Heart left ventricle (tissue), 16 donors: ENCODE measurements at regions of chr10 and their contacts with region 1.

Region 1: GRCh38 chr10:78407009-78407711 is 373.5 kb downstream of the RPS24 start:
- DNase-seq: peak; percentile 77 to 88 (median 83)
- ATAC-seq: peak; percentile 50 to 77 (median 70)
- H3K4me3 ChIP-seq: peak overlapping the region in 10 of 12 donors; percentile 16 to 51 (median 36)
- H3K27ac ChIP-seq: peak overlapping the region in 9 of 12 donors; percentile 50 to 94 (median 81)
- H3K4me1 ChIP-seq: peaks cover 0 to 45% (median 27%) of the 10 kb centered on the region in 12 donors
- H3K27me3 ChIP-seq: peaks cover 0 to 12% (median 0%) of the 10 kb centered on the region in 9 donors
- CTCF ChIP-seq: no peak
- POLR2A ChIP-seq: no peak

Region 2: DNA sequence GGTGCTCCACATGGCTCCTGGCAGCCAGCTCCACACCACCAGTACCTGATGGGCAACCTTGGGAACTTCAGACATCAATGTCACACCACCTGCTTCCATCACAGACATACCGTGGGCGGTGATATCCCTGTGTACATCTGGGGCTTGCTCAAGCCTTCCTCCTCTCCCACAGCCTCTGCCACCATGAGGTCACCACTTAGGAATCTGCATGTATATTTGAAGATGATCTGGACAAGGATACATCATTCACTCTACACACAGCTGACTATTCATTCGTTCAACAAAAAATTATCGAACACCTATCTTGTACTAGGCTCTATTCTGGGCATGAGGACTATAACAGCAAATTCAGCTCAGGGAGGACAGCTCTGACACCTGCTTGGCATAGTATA is 487.5 kb before region 1 on chr10:
- intact Hi-C with region 1: no loop called
- DNase-seq: no peak
- ATAC-seq: peak in 1 of 4 donors; percentile 24
- H3K4me3 ChIP-seq: no peak overlapping the region
- H3K27ac ChIP-seq: no peak overlapping the region
- H3K4me1 ChIP-seq: peaks cover 0 to 26% (median 7%) of the 10 kb centered on the region in 12 donors
- H3K27me3 ChIP-seq: no peaks in the 10 kb centered on the region
- CTCF ChIP-seq: no peak
- POLR2A ChIP-seq: no peak

Region 3: DNA sequence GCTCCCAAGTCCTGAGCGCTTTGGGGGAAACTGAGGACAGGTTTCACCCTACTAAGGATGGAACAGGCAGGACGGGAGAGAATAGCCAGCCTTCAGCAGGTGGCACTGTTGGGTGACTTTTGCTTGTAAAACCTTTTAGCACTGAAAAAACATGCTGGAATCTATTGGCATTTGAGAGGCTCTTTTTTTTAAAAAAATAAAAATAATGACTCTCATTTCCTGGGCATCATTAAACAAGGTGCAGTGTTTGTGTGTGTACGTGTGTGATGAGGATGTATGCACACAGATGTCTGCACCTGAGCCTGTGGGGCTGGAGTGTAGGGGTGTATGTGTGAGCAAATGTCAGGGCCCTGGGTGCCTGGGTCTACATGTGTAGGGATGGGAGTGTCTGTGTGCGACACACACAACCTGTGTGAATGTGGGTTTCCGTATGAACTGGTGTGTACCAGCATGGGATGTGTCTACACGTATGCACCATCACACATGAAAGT is 195.6 kb before region 1 on chr10:
- intact Hi-C with region 1: loop called in 2 of 10 experiments (anchors 5 kb)
- DNase-seq: peak in 1 of 5 donors; percentile 47
- ATAC-seq: peak in 3 of 4 donors; percentile 5 to 18 (median 9)
- H3K4me3 ChIP-seq: no peak overlapping the region
- H3K27ac ChIP-seq: peak overlapping the region in 5 of 12 donors; percentile 19 to 62 (median 52)
- H3K4me1 ChIP-seq: peaks cover 0 to 38% (median 19%) of the 10 kb centered on the region in 12 donors
- H3K27me3 ChIP-seq: no peaks in the 10 kb centered on the region
- CTCF ChIP-seq: peak in 11 of 12 donors; percentile 21 to 69 (median 55)
- POLR2A ChIP-seq: no peak

Region 4: GRCh38 chr10:78331391-78331922 is 75.7 kb before region 1 on chr10:
- intact Hi-C with region 1: no loop called
- DNase-seq: peak in 2 of 5 donors; percentile 13 to 42
- ATAC-seq: peak in 3 of 4 donors; percentile 38 to 71 (median 56)
- H3K4me3 ChIP-seq: no peak overlapping the region
- H3K27ac ChIP-seq: peak overlapping the region in 3 of 12 donors; percentile 1 to 78 (median 7)
- H3K4me1 ChIP-seq: peaks cover 0 to 24% (median 8%) of the 10 kb centered on the region in 12 donors
- H3K27me3 ChIP-seq: no peaks in the 10 kb centered on the region
- CTCF ChIP-seq: no peak
- POLR2A ChIP-seq: no peak

Region 5: GRCh38 chr10:78805176-78805575 is 398.0 kb after region 1 on chr10:
- intact Hi-C with region 1: no loop called
- DNase-seq: peak; percentile 67 to 88 (median 82)
- ATAC-seq: peak; percentile 90 to 93 (median 92)
- H3K4me3 ChIP-seq: no peak overlapping the region
- H3K27ac ChIP-seq: peak overlapping the region; percentile 57 to 87 (median 79)
- H3K4me1 ChIP-seq: peaks cover 0 to 68% (median 43%) of the 10 kb centered on the region in 12 donors
- H3K27me3 ChIP-seq: no peaks in the 10 kb centered on the region
- CTCF ChIP-seq: no peak
- POLR2A ChIP-seq: no peak